ENCODE measurements at regions of chr2 and their contacts with region 1.

Region 1: GRCh38 chr2:200306196-200306930 is at the start of gene SPATS2L:
- DNase-seq: peak; percentile 75
- H3K4me3 Mint-ChIP-seq: peak within 1 kb of the TSS; percentile 82
- H3K27ac Mint-ChIP-seq: peak within 1 kb of the TSS; percentile 52
- H3K4me1 Mint-ChIP-seq: peaks cover 25% of the 10 kb centered on the region
- H3K27me3 Mint-ChIP-seq: peaks cover 4% of the 10 kb centered on the region
- total RNA-seq, gene SPATS2L: 25.4 to 28.8 TPM

Region 2: DNA sequence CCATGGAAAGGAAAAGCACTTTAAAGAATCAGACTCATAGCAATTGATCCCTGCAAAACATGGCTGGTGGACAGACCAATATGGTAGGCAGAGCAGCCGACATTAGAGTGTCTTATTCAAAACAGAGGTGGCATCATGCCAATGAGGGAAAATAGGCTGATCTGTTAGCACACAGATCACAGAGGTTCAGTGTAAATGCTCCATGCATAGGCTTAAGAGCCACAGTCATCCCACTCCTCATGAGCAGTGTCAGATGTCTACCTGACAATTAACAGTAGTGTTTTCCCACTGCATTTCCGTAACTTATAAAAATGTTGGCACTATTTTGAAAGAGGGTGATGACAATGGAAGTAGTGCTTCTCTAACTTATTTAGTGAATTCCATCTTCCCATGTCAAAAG is 86.8 kb after region 1 on chr2:
- CTCF ChIA-PET with region 1: no interaction called
- POLR2A ChIA-PET with region 1: no interaction called
- intact Hi-C with region 1: no loop called
- DNase-seq: no peak
- H3K4me3 Mint-ChIP-seq: no peak overlapping the region
- H3K27ac Mint-ChIP-seq: no peak overlapping the region
- H3K4me1 Mint-ChIP-seq: no peaks in the 10 kb centered on the region
- H3K27me3 Mint-ChIP-seq: no peaks in the 10 kb centered on the region

Region 3: DNA sequence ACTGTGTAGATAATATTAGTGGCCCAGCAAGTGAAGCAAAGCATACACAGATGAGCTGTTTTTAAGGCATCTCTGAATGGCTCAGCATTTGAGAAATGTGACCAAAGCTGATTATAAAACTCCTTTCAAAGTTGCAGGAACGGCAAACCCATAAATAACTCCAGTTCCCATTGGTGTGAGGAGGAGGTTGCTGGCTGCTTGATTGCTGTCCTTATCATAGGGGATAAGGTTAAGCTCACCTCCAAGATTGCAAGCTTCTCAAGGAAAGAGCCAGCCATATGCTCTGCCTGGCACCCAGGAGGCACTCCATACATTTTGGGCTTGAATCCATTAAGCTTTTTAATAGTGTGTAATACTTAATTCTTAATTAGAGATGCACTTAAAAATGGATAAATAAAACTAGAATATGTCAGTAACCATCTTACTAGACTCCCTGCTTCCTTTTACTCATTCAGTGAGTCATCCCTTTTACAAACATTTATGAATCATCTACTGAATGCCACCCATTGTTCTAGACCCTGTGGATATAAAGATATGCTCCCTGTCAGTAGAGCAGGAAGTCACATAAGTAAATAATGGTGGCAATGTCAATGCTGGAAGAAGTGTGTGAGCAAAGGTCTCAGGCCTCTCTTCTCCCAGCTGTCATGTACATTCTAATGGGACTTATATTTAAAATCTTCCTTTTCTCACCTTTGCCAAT is 99.4 kb after region 1 on chr2:
- CTCF ChIA-PET with region 1: no interaction called
- POLR2A ChIA-PET with region 1: no interaction called
- intact Hi-C with region 1: loop called (anchors 5 kb)
- DNase-seq: no peak
- H3K4me3 Mint-ChIP-seq: no peak overlapping the region
- H3K27ac Mint-ChIP-seq: peak overlapping the region; percentile 43
- H3K4me1 Mint-ChIP-seq: peaks cover 33% of the 10 kb centered on the region
- H3K27me3 Mint-ChIP-seq: no peaks in the 10 kb centered on the region